Motor neuron (in vitro differentiated cells): ENCODE measurements at regions of chr12 and their contacts with region 1.

Region 1: GRCh38 chr12:109385339-109386067 is 37.8 kb downstream of the MYO1H start:
- ATAC-seq: peak; percentile 67 to 93 (median 84)
- H3K4me3 ChIP-seq: no peak overlapping the region
- H3K27ac ChIP-seq: no peak overlapping the region
- H3K4me1 ChIP-seq: peaks cover 0 to 4% of the 10 kb centered on the region in 2 donors

Region 2: GRCh38 chr12:109110988-109111495 is 274.5 kb before region 1 on chr12:
- in situ Hi-C with region 1: loop called in 4 of 9 experiments (anchors 10 to 25 kb)
- ATAC-seq: peak; percentile 81 to 96 (median 94)
- H3K4me3 ChIP-seq: peak overlapping the region; percentile 11 to 47 (median 28)
- H3K27ac ChIP-seq: peak overlapping the region; percentile 62 to 89
- H3K4me1 ChIP-seq: peaks cover 4 to 24% of the 10 kb centered on the region in 2 donors

Region 3: DNA sequence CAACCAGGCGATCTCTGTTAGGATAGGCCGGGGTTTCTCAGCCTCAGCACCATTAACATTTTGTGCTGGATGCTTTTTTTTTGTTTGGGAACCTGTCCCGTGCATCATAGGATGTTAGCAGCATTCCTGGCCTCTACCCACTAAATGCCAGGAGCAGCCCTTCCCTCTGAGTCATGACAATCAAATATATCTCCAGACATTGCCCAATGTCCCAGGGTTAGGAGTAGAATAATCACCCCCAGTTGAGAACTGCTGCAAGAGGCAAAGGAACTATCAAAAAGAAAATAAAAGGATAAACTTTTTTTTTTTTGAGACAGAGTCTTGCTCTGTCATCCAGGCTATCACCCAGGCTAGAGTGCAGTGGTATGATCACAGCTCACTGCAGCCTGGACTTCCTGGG is 193.1 kb before region 1 on chr12:
- in situ Hi-C with region 1: no loop called
- ATAC-seq: no peak
- H3K4me3 ChIP-seq: no peak overlapping the region
- H3K27ac ChIP-seq: no peak overlapping the region
- H3K4me1 ChIP-seq: no peaks in the 10 kb centered on the region

Region 4: DNA sequence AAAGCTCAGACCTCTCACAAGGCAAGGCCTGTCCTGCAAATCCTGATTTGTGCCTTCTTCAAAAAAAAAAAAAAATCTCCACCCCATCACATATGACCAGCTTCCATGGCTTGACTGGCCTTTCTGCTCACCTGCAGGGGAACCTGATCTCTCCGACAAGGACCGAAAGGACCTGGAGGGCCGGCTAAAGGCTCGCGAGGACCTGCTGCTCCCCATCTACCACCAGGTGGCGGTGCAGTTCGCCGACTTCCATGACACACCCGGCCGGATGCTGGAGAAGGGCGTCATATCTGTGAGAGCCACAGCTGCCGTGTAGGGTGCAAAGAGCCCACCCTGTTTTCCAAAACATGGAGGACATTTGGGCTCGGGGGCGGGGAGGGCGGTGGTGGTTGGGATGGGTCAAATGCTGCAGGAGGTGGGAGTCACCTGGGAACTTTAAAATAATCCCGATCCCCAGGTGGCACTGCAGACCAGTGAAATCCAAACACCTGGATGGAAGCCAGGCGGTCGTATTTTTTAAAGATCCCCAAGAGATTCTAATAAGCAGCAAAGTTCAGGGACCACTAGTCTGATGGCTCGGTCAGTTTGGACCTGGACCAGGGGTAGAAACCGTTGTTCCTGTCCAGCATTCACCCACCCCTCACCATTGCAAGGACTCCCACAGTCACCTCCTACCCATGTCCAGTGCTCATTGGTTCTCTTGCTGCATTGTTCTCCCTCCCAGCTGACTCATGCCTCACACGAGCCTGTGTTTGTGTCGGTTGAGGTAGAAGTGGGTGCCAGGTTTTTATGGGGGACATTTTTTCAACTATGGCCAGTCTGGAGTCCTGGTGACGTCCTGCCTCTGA is 121.2 kb before region 1 on chr12:
- in situ Hi-C with region 1: loop called in 8 of 9 experiments (anchors 10 to 25 kb)
- ATAC-seq: peak; percentile 82 to 98 (median 96)
- H3K4me3 ChIP-seq: no peak overlapping the region
- H3K27ac ChIP-seq: no peak overlapping the region
- H3K4me1 ChIP-seq: peaks cover 0 to 5% of the 10 kb centered on the region in 2 donors

Region 5: DNA sequence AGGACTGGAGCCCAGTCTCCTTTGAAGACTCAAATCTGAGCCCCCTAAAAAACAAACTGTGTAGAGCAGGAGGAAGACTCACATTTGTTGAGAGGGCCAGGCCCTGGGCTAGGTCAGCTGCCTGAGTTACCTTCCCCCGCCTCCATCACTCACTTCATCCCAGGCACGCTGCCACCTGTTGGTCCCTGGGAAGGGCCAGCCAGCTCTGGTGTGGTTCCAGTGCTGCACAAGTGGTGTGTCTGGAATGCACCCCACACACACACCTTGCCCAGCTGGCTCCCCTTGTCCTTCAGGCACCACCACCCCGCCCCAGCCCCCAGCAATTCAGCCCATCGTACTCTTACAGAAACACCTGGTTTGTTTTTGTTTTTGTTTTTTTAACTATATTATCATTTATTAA is 197.2 kb after region 1 on chr12:
- in situ Hi-C with region 1: no loop called
- ATAC-seq: peak in 1 of 8 experiments; percentile 5
- H3K4me3 ChIP-seq: no peak overlapping the region
- H3K27ac ChIP-seq: no peak overlapping the region
- H3K4me1 ChIP-seq: peaks cover 3 to 10% of the 10 kb centered on the region in 2 donors